Vagina (tissue), 2 donors: ENCODE measurements at regions of chr7 and their contacts with region 1.

Region 1: DNA sequence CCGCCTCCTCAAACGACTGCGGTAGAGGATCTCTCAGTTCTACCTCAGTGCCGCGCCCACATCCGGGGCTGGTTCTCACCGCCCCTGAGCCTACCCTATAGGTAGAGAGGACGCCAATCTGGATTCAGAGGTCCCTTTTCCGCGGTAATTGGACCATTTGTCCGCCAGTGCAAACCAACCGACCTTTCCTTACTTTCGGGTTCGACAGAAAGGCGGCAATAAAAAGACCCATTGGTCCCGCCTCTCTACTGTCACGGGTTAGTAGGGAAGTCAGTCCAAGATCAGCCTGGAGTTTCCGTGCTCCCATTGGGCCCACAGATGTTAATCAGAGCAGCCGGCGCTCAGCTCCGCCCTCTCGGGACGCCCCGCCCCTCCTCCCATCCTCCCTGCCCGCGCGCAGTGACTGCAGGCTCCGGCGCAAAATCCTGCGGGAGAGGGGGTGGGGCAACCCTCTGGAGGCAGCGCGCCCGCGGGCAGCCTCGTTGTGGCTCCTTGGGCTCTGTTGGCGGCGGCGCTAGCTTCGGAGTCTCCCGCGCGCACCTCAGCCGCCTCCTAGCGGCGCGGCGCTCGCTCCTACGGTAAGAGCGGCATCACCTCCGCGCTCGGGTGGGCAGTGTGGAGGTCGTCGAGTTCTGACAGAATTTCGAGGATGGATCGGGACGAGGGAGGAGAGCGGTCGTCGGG is at the starts of genes PHTF2 and TMEM60:
- DNase-seq: peak; percentile 100
- H3K4me3 ChIP-seq: peak within 1 kb of the TSS; percentile 81 to 93
- H3K27ac ChIP-seq: peak within 1 kb of the TSS; percentile 91
- H3K4me1 ChIP-seq: peaks cover 39% of the 10 kb centered on the region
- H3K27me3 ChIP-seq: no peaks in the 10 kb centered on the region
- CTCF ChIP-seq: peak in 2 of 3 experiments; percentile 4 to 29
- POLR2A ChIP-seq: peak in 1 of 2 donors; percentile 76
- total RNA-seq, gene PHTF2: 12.0 TPM
- total RNA-seq, gene TMEM60: 13.5 TPM

Region 2: DNA sequence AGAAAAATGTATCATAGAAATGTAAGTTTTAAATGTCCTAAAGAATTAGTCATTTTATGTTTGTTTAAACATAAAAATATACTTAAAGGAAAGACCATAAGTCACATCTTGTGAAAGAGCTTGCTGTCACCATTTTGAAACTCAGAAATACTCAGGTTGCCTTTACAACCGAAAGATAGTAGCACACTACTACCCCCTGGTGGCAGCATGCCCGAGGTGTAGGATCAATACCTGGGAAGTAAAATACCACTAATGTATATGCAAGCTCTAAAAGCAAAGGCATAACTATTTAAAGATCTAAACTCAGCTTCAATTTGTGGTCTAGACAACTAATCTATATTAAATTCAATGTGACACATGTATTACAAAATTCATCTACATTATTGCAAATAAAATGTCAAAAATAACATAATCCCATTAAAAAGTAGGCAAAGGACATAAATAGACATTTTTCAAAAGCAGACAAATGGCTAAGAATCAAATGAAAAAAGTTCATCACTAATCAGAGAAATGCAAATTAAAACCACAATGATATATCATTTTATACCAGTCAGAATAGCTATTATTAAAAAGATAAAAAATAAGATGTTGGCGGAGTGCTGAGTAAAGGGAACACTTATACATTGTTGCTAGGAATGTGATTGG is 551.2 kb before region 1 on chr7:
- intact Hi-C with region 1: no loop called
- DNase-seq: no peak
- H3K4me3 ChIP-seq: no peak overlapping the region
- H3K27ac ChIP-seq: no peak overlapping the region
- H3K4me1 ChIP-seq: no peaks in the 10 kb centered on the region
- H3K27me3 ChIP-seq: no peaks in the 10 kb centered on the region
- CTCF ChIP-seq: peak; percentile 50 to 72 (median 71)
- POLR2A ChIP-seq: no peak

Region 3: GRCh38 chr7:78020136-78020873 is 221.8 kb after region 1 on chr7:
- intact Hi-C with region 1: loop called (anchors 5 kb)
- DNase-seq: no peak
- H3K4me3 ChIP-seq: peak overlapping the region; percentile 53 to 59
- H3K27ac ChIP-seq: peak overlapping the region; percentile 94
- H3K4me1 ChIP-seq: peaks cover 23% of the 10 kb centered on the region
- H3K27me3 ChIP-seq: no peaks in the 10 kb centered on the region
- CTCF ChIP-seq: peak; percentile 36 to 52 (median 37)
- POLR2A ChIP-seq: no peak